A673 (cell line): ENCODE measurements at regions of chr7 and their contacts with region 1.

Region 1: GRCh38 chr7:107879400-107880035 is 11.5 kb upstream of the DLD start:
- DNase-seq: peak; percentile 73
- H3K4me3 ChIP-seq: no peak overlapping the region
- H3K27ac ChIP-seq: no peak overlapping the region
- H3K4me1 ChIP-seq: peaks cover 16% of the 10 kb centered on the region
- H3K27me3 ChIP-seq: no peaks in the 10 kb centered on the region
- CTCF ChIP-seq: peak; percentile 85

Region 2: DNA sequence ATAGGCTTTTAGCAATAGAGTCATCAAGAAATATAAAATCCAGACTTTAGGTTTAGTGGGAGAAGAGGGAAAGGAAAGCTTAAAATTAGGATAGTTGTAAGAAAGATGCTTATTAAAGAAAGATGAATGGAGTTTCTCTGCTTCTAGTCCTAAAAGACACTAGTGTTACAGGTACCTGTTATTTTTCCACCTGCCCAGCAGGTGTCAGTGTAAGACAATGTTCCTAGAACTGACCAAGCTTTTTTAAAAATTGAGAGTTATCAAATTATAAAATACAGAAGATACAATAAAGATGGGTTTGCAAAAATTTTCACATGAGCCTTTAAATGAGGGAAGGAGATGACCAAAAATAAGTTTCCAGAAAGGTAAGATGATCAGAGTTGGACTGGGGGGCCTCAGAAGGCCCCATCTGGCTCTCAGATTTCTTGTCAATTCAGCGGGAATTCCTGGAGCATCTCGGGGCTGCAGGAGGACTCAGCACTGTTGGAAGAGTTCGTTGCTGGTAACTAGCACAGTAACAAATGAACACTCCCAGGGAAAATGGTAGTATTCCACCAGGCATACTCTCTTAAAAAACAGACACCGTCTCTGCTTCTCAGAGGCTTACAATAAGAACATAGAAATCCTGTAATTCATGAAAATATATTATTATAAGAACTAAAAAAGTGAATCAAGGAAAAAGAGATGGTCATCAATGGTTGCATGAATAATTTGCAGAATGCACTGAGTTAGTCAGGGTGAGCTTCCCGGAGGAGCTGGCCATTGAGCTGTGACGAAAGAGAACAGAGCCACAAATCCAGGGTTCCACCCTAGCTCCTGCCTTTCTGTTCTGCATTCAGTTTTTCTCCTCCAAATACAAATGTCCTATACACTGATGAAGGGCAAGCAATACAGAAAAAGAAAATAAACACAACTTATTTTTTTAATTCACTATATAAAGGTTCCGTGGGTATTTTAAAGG is 1086.2 kb before region 1 on chr7:
- CTCF ChIA-PET with region 1: no interaction called
- POLR2A ChIA-PET with region 1: no interaction called
- intact Hi-C with region 1: loop called (anchors 5 kb)
- DNase-seq: peak; percentile 17
- H3K4me3 ChIP-seq: no peak overlapping the region
- H3K27ac ChIP-seq: no peak overlapping the region
- H3K4me1 ChIP-seq: no peaks in the 10 kb centered on the region
- H3K27me3 ChIP-seq: no peaks in the 10 kb centered on the region
- CTCF ChIP-seq: peak; percentile 75

Region 3: GRCh38 chr7:106947244-106947728 is 932.2 kb before region 1 on chr7:
- CTCF ChIA-PET with region 1: interaction called, 3 read pairs
- POLR2A ChIA-PET with region 1: no interaction called
- intact Hi-C with region 1: loop called (anchors 10 kb)
- DNase-seq: peak; percentile 79
- H3K4me3 ChIP-seq: no peak overlapping the region
- H3K27ac ChIP-seq: no peak overlapping the region
- H3K4me1 ChIP-seq: no peaks in the 10 kb centered on the region
- H3K27me3 ChIP-seq: peaks cover 9% of the 10 kb centered on the region
- CTCF ChIP-seq: peak; percentile 72

Region 4: DNA sequence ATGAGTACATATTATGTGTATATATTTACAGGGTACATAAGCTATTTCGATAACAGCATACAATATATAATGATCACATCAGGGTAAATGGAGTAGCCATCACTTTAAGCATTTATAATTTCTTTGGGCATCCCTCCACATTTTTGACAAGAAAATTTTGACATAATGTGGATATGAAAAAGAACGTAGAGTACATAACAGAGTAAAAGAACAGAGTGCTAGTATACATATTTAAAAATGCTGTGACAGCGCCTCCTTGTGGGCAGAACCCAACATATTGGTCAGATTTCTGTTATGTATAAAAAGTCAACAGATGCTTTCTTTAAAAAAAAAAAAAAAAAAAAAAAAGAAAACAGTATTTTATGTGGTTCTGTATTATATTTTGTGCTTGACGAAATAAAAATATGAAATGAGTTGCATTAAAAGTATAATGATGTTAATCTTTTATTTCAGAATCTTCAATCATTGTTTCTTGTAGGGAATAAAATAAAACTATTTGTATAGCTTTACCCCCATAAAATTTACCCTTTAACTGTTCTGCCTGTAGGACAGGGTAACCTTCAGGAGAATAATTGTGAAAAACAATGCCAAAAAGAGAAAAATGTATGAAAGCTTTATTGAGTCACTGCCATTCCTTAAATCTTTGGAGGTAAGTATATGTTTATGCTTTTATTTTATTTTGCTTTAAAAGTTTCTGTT is 729.0 kb before region 1 on chr7:
- CTCF ChIA-PET with region 1: interaction called, 7 read pairs
- POLR2A ChIA-PET with region 1: interaction called, 4 read pairs
- intact Hi-C with region 1: loop called (anchors 10 kb)
- DNase-seq: peak; percentile 67
- H3K4me3 ChIP-seq: no peak overlapping the region
- H3K27ac ChIP-seq: no peak overlapping the region
- H3K4me1 ChIP-seq: no peaks in the 10 kb centered on the region
- H3K27me3 ChIP-seq: no peaks in the 10 kb centered on the region
- CTCF ChIP-seq: peak; percentile 73

Region 5: DNA sequence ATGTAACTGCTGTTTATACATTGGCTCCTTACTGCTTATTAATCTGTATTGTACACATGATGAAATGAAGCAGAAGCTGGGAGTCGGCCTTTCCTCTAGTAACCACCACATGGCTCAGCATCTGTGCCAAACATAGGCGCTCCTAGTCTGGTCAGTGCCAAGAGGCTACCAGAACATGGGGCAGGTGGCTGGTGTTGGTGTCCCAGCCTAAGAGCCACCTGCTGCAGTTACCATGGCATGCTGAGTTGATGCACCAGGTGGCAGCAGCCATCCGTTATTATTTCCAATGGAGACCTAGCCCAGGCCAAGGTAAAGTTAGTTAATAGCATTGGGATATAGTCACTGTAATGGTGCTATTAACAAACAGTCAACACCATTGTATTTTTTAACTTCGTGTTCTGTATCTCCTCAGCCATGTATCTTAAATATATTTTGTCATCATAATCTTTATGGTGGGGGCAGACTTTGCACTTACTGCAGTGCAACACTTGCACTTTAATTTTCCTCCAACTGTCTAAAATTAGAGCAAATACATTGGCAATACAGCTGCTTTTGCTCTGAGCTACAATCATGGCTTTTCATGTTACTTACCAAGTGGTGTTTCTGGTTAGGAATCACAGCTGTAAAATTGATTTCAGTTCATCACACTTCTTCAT is 677.6 kb before region 1 on chr7:
- CTCF ChIA-PET with region 1: interaction called, 3 read pairs
- POLR2A ChIA-PET with region 1: no interaction called
- intact Hi-C with region 1: loop called (anchors 5 kb)
- DNase-seq: peak; percentile 38
- H3K4me3 ChIP-seq: no peak overlapping the region
- H3K27ac ChIP-seq: no peak overlapping the region
- H3K4me1 ChIP-seq: no peaks in the 10 kb centered on the region
- H3K27me3 ChIP-seq: no peaks in the 10 kb centered on the region
- CTCF ChIP-seq: peak; percentile 52

Region 6: DNA sequence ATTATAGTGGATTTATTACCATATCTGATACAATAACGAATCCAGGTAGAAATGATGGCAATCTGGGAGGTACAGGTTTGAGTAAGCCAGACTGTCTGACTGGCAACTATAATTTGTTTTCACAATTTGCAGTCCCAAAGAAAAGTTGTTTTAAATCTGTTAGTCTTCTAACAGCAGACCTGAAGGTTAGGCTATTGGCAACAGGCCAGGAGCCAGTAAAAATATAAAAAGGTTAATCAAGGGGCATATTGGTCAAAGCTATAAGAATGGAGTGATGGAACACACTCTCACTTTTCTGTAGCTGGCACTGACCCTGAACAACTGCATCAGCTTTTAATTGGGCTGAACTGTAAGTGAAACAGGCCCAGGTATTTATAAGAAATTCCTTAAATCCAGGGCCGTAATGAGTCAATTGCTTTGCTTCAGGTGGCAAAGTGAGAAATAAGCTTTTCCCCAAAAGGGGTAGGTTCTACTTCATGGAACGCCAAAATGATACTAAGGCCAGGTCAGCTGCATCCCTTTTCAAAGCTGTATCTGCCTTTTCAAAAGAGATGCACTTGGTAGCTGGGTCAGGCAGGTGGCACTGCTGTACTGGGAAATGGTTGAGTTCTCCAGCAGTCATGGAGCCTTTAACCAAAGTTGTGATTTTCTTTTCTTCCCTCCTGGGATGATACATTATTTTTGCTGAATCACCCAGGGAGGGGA is 416.6 kb before region 1 on chr7:
- CTCF ChIA-PET with region 1: interaction called, 8 read pairs
- POLR2A ChIA-PET with region 1: no interaction called
- intact Hi-C with region 1: loop called (anchors 2 kb)
- DNase-seq: peak; percentile 71
- H3K4me3 ChIP-seq: no peak overlapping the region
- H3K27ac ChIP-seq: no peak overlapping the region
- H3K4me1 ChIP-seq: no peaks in the 10 kb centered on the region
- H3K27me3 ChIP-seq: no peaks in the 10 kb centered on the region
- CTCF ChIP-seq: peak; percentile 74

Region 7: DNA sequence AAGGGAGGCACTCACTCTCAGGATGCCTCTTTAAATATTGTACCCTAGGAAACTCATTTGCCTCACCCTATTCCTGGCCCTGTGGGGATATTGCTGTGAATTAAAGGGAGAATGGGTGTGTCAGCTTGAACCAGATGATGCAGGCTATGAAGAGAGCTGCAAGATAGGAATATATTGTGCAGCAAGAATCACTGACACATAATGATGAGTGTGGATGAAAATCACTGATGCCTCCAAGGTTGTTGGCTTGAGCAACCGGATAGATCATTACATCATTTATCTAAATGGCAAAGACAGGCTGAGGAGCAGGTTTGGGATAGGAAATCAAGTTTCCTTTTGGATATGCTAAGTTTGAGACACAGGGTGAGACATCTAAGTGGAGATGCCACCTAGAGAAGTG is 212.7 kb before region 1 on chr7:
- CTCF ChIA-PET with region 1: no interaction called
- POLR2A ChIA-PET with region 1: no interaction called
- intact Hi-C with region 1: no loop called
- DNase-seq: no peak
- H3K4me3 ChIP-seq: no peak overlapping the region
- H3K27ac ChIP-seq: no peak overlapping the region
- H3K4me1 ChIP-seq: no peaks in the 10 kb centered on the region
- H3K27me3 ChIP-seq: peaks cover 57% of the 10 kb centered on the region
- CTCF ChIP-seq: no peak

Region 8: GRCh38 chr7:107743567-107744344 is 135.8 kb before region 1 on chr7 and contains the start of gene CBLL1:
- CTCF ChIA-PET with region 1: interaction called, 24 read pairs
- POLR2A ChIA-PET with region 1: no interaction called
- intact Hi-C with region 1: loop called (anchors 1 kb)
- DNase-seq: peak; percentile 98
- H3K4me3 ChIP-seq: peak within 1 kb of the TSS; percentile 80
- H3K27ac ChIP-seq: peak within 1 kb of the TSS; percentile 97
- H3K4me1 ChIP-seq: peaks cover 23% of the 10 kb centered on the region
- H3K27me3 ChIP-seq: no peaks in the 10 kb centered on the region
- CTCF ChIP-seq: peak; percentile 86
- total RNA-seq, gene CBLL1: 30.8 and 37.9 TPM in 2 replicates